ENCODE measurements at regions of chr6 and their contacts with region 1.

Region 1: DNA sequence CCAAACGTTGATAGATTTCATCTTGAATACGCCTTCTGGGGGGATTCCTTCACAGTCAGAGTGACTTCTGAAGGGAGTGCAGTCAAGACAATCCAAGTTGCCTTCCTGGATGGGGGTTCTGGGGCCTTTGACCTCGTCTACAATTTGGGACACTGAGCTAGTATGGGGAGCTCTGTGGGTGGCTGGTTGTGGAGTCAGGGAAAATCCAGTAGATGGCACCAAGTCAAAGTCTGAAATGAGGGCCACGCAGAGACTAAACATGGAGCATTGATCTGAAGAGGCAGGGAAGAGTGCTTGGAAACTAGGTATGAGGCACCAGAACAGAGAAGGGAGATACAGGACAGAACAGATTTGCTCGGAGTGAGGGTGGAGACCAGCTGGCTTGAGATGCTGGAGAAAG is 43.6 kb upstream of the CCN6 start:
- DNase-seq: peak; percentile 43
- H3K4me3 Mint-ChIP-seq: no peak overlapping the region
- H3K27ac Mint-ChIP-seq: no peak overlapping the region
- H3K4me1 Mint-ChIP-seq: no peaks in the 10 kb centered on the region
- H3K27me3 Mint-ChIP-seq: no peaks in the 10 kb centered on the region

Region 2: GRCh38 chr6:111709615-111710398 is 300.5 kb before region 1 on chr6:
- CTCF ChIA-PET with region 1: interaction called, 17 read pairs
- DNase-seq: peak; percentile 66
- H3K4me3 Mint-ChIP-seq: no peak overlapping the region
- H3K27ac Mint-ChIP-seq: peak overlapping the region; percentile 74
- H3K4me1 Mint-ChIP-seq: peaks cover 53% of the 10 kb centered on the region
- H3K27me3 Mint-ChIP-seq: no peaks in the 10 kb centered on the region

Region 3: DNA sequence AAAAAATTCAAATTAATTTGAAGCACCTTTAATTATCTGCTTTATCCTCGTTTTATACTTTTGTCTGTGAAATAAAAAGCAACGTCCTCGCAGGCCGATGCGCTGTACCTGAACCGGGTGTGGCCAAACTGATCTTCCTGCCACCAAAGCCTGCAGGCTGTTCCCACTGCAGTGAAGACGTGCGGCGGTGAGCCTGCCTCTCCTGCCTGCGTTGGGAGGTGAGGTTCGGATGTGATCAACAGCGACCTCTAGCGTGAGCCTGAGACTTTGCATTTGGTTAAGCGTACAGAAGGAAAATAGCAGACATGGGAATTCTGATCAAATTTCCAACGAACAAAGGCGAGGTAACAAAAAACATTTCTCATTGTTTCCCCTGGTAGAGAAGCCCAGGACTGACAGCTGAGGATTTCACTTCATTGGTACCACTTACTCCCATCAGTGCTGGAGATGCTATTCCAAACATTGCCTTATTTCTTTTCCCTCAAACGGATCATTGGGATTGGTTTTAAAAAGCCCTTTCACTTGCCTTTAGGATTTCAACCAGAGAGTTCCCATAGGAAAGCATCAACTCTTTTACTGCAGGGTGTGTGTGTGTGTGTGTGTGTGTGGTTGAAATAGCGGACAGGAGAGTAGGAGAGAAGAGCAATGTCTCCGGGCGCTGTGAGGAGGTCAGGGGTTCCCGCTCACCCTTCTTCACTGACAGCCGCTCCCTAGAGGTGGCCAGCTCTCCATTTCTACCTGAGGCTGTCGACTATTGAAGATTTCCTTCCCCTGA is 13.1 kb before region 1 on chr6:
- CTCF ChIA-PET with region 1: interaction called, 27 read pairs
- DNase-seq: peak; percentile 87
- H3K4me3 Mint-ChIP-seq: peak overlapping the region; percentile 29
- H3K27ac Mint-ChIP-seq: peak overlapping the region; percentile 58
- H3K4me1 Mint-ChIP-seq: peaks cover 45% of the 10 kb centered on the region
- H3K27me3 Mint-ChIP-seq: no peaks in the 10 kb centered on the region

Region 4: DNA sequence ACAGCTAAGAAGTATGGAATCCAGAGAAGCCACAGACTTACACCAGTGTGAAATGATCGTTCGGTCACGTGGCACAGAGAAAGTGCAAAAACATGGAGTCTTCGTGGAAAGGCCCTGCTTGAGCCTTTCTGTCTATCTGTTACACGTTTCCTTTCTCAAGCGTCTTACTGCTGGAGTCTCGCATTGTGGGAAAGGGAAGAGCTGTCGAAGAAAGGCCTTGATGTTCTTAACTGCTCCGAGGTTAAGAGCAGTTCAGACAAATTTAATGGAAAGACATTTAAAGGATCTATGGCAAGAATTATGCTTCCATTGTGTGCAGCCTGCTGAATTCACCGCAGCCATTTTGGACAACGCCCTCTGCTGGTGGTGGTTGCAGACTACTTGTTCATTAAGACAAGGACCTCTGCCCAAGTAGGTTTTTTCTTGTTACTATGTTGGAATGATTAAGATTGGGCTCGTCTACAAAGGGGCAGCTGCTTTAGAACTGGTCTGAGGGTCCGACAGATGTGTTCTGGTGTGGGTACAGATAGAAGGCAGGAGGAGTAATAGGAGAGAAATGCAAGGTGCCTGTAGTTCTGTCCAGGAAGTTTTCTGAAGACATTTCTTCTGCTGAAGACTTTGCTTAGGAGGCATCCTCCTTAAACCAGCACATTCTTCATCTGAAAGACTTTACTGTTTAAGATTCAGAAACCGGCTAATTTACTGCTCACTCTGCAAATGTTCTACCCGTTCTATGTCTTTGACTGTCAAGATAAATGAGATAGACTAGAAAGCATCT is 18.9 kb after region 1 on chr6:
- CTCF ChIA-PET with region 1: interaction called, 47 read pairs
- DNase-seq: peak; percentile 72
- H3K4me3 Mint-ChIP-seq: no peak overlapping the region
- H3K27ac Mint-ChIP-seq: peak overlapping the region; percentile 98
- H3K4me1 Mint-ChIP-seq: peaks cover 64% of the 10 kb centered on the region
- H3K27me3 Mint-ChIP-seq: no peaks in the 10 kb centered on the region

Region 5: GRCh38 chr6:112037783-112038216 is 27.5 kb after region 1 on chr6:
- CTCF ChIA-PET with region 1: interaction called, 147 read pairs
- DNase-seq: no peak
- H3K4me3 Mint-ChIP-seq: no peak overlapping the region
- H3K27ac Mint-ChIP-seq: no peak overlapping the region
- H3K4me1 Mint-ChIP-seq: peaks cover 43% of the 10 kb centered on the region
- H3K27me3 Mint-ChIP-seq: peaks cover 4% of the 10 kb centered on the region

Region 6: DNA sequence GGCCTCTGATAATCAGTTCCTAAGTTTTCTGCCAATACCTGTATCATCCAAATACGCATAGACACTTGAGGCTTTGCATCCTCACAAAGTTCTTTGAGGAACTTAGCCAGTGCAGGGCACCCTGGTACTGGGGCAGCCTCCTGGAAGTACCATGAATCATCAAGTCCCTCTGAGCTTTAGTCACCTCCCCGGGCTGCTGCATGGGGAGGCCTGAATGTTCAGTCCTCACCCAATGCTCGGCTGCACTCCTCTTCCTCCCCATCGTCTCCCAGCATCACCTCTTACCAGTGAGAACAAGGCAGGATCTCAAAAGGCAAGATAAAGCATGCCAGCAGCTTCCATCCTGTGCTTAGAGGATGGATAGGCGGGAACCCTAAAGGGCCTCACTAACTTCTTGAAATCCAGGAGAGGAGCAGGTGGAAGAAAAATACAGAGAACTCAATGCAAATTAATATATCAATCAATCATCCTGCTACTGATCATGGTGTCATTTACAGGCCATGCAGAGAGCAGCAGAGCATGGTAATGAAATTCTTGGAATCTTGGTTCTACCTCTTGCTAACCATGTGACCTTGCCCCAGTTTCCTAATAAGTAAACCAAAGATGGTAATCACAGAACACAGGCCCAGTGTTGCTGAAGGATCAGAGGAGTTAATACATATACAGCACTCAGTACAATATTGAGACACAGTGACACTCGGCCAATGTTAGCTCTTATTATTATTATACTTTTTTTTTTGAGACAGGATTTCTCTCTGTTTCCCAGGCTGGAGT is 38.9 kb after region 1 on chr6:
- CTCF ChIA-PET with region 1: interaction called, 147 read pairs
- DNase-seq: no peak
- H3K4me3 Mint-ChIP-seq: no peak overlapping the region
- H3K27ac Mint-ChIP-seq: peak overlapping the region; percentile 42
- H3K4me1 Mint-ChIP-seq: no peaks in the 10 kb centered on the region
- H3K27me3 Mint-ChIP-seq: peaks cover 4% of the 10 kb centered on the region

Region 7: DNA sequence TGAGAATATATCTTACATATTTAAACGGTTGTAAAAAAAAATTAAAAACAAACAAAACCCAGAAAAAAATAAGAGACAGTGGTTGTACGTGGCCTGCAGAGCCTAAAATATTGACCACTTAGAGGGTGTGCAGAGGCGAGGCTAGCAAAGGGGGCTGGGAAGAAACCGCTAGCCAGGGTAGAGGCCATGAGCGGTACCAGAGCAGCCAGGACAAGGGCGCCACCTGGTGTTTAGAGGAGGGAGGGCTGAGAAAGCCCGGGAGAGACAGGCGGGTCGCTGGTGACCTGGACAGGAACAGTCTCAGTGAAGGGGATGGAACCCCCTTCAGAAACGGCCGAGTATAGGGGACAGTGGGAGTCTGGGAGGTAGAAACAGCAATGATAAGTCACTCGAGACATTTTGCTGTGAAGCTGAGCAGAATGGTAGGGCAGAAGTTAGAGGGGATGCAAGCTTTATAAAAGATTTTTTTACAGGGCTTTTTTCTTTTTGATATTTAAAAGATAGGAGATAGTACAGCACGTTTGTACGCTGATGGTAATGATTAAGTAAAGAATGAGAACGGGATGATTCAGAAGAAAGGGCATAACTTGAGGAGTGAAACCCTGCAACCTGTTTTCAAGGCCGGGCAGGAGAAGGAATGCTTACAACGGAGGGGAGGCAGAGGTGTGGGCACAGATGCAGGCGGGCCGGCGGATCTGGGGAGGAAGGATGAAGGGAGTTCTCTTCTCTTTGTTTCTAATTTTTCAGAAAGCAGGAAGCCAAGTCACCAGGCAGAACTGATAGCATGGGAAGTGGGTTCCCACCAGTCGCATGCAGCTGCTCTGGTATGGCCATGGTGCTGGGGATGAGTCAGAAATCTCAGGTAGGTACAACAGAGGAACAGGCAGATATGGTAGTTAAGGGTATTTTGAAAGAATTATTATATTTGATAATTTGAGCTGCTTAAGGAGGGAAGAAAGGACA is 153.2 kb after region 1 on chr6:
- CTCF ChIA-PET with region 1: interaction called, 15 read pairs
- DNase-seq: peak; percentile 82
- H3K4me3 Mint-ChIP-seq: peak overlapping the region; percentile 34
- H3K27ac Mint-ChIP-seq: peak overlapping the region; percentile 21
- H3K4me1 Mint-ChIP-seq: peaks cover 19% of the 10 kb centered on the region
- H3K27me3 Mint-ChIP-seq: peaks cover 37% of the 10 kb centered on the region

Region 8: DNA sequence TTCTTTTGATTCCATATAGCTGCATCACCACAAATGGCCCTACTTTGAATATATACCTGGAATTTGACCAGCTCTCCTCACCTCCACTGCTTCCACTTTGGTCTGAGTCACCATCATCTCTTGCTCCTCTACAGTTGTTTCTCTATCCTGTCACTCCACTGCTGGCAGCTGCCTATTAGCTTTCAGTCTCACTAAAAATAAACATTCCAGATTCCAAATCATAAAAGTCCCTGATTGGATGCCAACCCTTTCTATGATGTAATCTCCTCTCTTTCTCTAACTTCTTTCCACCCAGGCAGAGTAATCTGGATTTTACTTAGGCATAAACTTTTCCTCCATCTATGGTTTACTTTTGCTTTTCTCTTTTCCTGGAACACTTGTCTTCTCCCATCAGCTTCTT is 385.9 kb after region 1 on chr6:
- CTCF ChIA-PET with region 1: no interaction called
- DNase-seq: no peak
- H3K4me3 Mint-ChIP-seq: no peak overlapping the region
- H3K27ac Mint-ChIP-seq: no peak overlapping the region
- H3K4me1 Mint-ChIP-seq: no peaks in the 10 kb centered on the region
- H3K27me3 Mint-ChIP-seq: no peaks in the 10 kb centered on the region

Measured in activated naive CD4-positive, alpha-beta T cell treated with anti-CD3 and anti-CD28 coated beads, Interleukin-2, amount 10 ng/mL, durations not matched to agents 7 days and 5 days (primary cell).